Activated CD8-positive, alpha-beta memory T cell treated with anti-CD3 and anti-CD28 coated beads, Interleukin-2, amount 10 ng/mL, durations not matched to agents 7 days and 5 days (primary cell): ENCODE measurements at regions of chr9 and their contacts with region 1.

Region 1: GRCh38 chr9:127734747-127735529 is at the start of gene TOR2A:
- DNase-seq: peak; percentile 98
- ATAC-seq: peak; percentile 93
- H3K4me3 Mint-ChIP-seq: peak within 1 kb of the TSS; percentile 76
- H3K27ac Mint-ChIP-seq: peak within 1 kb of the TSS; percentile 83
- H3K4me1 Mint-ChIP-seq: peaks cover 20% of the 10 kb centered on the region
- H3K27me3 Mint-ChIP-seq: no peaks in the 10 kb centered on the region
- total RNA-seq, gene TOR2A: 24.1 to 26.8 TPM

Region 2: DNA sequence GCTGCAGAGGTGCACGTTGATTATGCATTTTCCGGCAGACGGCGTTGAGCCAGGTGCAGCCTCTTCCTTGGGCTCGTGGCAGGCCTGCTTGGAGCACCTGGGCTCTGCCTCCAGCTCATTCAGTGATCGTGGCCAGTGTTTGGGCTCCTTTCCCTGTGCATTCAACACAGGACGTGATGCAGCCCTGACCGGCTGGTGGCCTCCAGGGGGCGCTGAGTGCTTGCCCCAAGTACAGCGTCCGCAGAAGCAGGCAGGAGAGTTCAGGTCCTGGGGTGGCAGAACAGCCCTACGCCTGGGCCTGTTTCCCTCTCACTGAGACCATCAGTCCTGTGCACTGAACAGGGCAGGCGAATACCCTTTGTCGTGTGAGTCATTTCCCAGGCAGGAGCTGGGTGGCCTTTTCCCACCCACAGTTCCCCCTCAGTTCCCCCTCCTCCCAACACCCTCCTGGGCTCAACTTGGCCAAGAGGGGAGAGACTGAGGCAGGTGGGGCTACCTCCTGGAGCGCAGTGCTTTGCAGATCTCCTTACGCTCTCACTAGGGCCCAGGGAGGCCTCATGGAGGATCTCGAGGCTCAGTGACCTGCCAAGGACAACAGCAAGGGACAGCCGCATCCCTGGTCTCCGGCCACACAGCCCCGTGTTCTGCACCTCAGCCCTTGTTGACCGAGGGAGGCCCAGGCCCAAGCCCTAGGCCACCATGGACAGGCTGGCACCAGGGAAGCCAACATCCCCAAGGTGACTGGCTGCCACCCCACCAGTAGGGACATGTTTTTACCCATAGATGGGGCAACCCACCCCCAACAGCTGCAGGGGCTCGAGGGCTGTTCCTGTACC is 230.8 kb before region 1 on chr9:
- CTCF ChIA-PET with region 1: interaction called, 27 read pairs
- DNase-seq: peak; percentile 88
- ATAC-seq: peak; percentile 93
- H3K4me3 Mint-ChIP-seq: no peak overlapping the region
- H3K27ac Mint-ChIP-seq: no peak overlapping the region
- H3K4me1 Mint-ChIP-seq: peaks cover 6% of the 10 kb centered on the region
- H3K27me3 Mint-ChIP-seq: no peaks in the 10 kb centered on the region

Region 3: GRCh38 chr9:127578955-127579853 is 155.7 kb before region 1 on chr9:
- CTCF ChIA-PET with region 1: interaction called, 27 read pairs
- DNase-seq: peak; percentile 91
- ATAC-seq: peak; percentile 99
- H3K4me3 Mint-ChIP-seq: peak overlapping the region; percentile 76
- H3K27ac Mint-ChIP-seq: peak overlapping the region; percentile 90
- H3K4me1 Mint-ChIP-seq: peaks cover 54% of the 10 kb centered on the region
- H3K27me3 Mint-ChIP-seq: no peaks in the 10 kb centered on the region

Region 4: DNA sequence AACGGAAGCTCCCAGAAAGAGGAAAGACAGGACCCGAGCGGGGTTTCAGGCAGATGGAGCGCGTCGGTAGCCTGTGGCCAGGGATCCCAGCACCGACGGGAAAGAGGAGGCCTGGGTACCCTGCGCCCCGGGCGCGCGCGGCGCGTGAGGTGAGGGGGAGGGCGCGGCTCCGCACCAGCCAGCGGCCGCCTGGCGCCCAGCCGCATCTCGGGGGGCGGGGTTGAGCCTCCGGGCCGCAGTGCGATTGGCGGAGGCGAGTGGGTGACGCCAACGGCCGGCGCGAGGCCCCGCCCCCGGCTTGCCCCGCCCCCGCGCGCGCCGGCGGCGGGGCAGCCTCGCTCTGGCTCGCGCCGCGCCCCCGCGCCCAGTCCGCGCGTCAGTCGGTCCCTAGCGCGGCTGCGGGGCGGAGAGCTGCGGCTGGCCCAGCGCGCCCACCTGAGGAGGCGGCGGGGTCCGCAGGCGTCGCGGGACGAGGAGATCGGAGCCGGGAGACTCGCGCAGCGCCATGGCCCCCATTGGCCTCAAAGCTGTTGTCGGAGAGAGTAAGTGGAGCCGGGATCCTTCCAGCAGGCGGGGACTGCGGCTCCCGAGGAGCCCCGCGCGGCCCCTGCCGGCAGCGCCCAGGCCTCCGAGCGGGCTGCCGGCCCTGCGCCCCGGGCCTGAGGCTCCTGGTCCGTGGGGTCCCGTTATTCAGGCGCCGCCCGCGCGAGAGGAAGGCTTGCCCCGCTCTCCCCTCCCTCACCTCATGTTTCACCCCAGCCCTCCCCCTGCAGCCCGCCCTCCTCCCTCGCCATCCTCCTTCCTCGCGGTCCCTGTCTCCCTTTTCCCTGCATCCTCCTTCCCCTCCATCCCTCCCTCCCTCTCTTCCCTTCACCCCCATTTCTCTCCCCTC is 122.8 kb before region 1 on chr9 and contains the start of gene STXBP1:
- CTCF ChIA-PET with region 1: interaction called, 37 read pairs
- DNase-seq: peak; percentile 90
- ATAC-seq: peak; percentile 91
- H3K4me3 Mint-ChIP-seq: peak within 1 kb of the TSS; percentile 85
- H3K27ac Mint-ChIP-seq: peak within 1 kb of the TSS; percentile 58
- H3K4me1 Mint-ChIP-seq: peaks cover 31% of the 10 kb centered on the region
- H3K27me3 Mint-ChIP-seq: peaks cover 42% of the 10 kb centered on the region
- total RNA-seq, gene STXBP1: 22.8 to 26.0 TPM

Region 5: GRCh38 chr9:127721391-127721853 is 13.5 kb before region 1 on chr9:
- CTCF ChIA-PET with region 1: interaction called, 30 read pairs
- DNase-seq: no peak
- ATAC-seq: no peak
- H3K4me3 Mint-ChIP-seq: no peak overlapping the region
- H3K27ac Mint-ChIP-seq: peak overlapping the region; percentile 79
- H3K4me1 Mint-ChIP-seq: peaks cover 22% of the 10 kb centered on the region
- H3K27me3 Mint-ChIP-seq: no peaks in the 10 kb centered on the region

Region 6: GRCh38 chr9:127779136-127779981 is 44.4 kb after region 1 on chr9:
- CTCF ChIA-PET with region 1: interaction called, 86 read pairs
- DNase-seq: peak; percentile 81
- ATAC-seq: peak; percentile 45
- H3K4me3 Mint-ChIP-seq: peak overlapping the region; percentile 100
- H3K27ac Mint-ChIP-seq: peak overlapping the region; percentile 97
- H3K4me1 Mint-ChIP-seq: peaks cover 62% of the 10 kb centered on the region
- H3K27me3 Mint-ChIP-seq: no peaks in the 10 kb centered on the region

Region 7: GRCh38 chr9:127869310-127870152 is 134.6 kb after region 1 on chr9:
- CTCF ChIA-PET with region 1: interaction called, 61 read pairs
- DNase-seq: peak; percentile 88
- ATAC-seq: peak; percentile 86
- H3K4me3 Mint-ChIP-seq: no peak overlapping the region
- H3K27ac Mint-ChIP-seq: no peak overlapping the region
- H3K4me1 Mint-ChIP-seq: peaks cover 15% of the 10 kb centered on the region
- H3K27me3 Mint-ChIP-seq: no peaks in the 10 kb centered on the region